Naive thymus-derived CD4-positive, alpha-beta T cell (primary cell): ENCODE measurements at regions of chr22 and their contacts with region 1.

Region 1: GRCh38 chr22:17171313-17172171 is 12.5 kb upstream of the HDHD5 start:
- DNase-seq: peak; percentile 54 to 89 (median 64)
- ATAC-seq: peak; percentile 96
- H3K4me3 ChIP-seq: peak overlapping the region; percentile 71
- H3K4me3 Mint-ChIP-seq: peak overlapping the region; percentile 82 to 91 (median 86)
- H3K27ac ChIP-seq: peak overlapping the region; percentile 66
- H3K27ac Mint-ChIP-seq: peak overlapping the region; percentile 24 to 88 (median 71)
- H3K4me1 ChIP-seq: peaks cover 0 to 4% of the 10 kb centered on the region in 2 donors
- H3K4me1 Mint-ChIP-seq: peaks cover 3 to 9% (median 5%) of the 10 kb centered on the region in 7 donors
- H3K27me3 ChIP-seq: no peaks in the 10 kb centered on the region
- H3K27me3 Mint-ChIP-seq: peaks cover 0 to 11% (median 0%) of the 10 kb centered on the region in 5 donors

Region 2: GRCh38 chr22:16917144-16918003 is 254.2 kb before region 1 on chr22:
- CTCF ChIA-PET with region 1: no interaction called
- POLR2A ChIA-PET with region 1: no interaction called
- intact Hi-C with region 1: loop called in 1 of 2 experiments (anchors 1 kb)
- DNase-seq: peak; percentile 11 to 60 (median 28)
- ATAC-seq: no peak
- H3K4me3 ChIP-seq: no peak overlapping the region
- H3K4me3 Mint-ChIP-seq: no peak overlapping the region
- H3K27ac ChIP-seq: no peak overlapping the region
- H3K27ac Mint-ChIP-seq: no peak overlapping the region
- H3K4me1 ChIP-seq: no peaks in the 10 kb centered on the region
- H3K4me1 Mint-ChIP-seq: peaks cover 0 to 6% (median 3%) of the 10 kb centered on the region in 7 donors
- H3K27me3 ChIP-seq: no peaks in the 10 kb centered on the region
- H3K27me3 Mint-ChIP-seq: peaks cover 19 to 38% (median 29%) of the 10 kb centered on the region in 5 donors

Region 3: DNA sequence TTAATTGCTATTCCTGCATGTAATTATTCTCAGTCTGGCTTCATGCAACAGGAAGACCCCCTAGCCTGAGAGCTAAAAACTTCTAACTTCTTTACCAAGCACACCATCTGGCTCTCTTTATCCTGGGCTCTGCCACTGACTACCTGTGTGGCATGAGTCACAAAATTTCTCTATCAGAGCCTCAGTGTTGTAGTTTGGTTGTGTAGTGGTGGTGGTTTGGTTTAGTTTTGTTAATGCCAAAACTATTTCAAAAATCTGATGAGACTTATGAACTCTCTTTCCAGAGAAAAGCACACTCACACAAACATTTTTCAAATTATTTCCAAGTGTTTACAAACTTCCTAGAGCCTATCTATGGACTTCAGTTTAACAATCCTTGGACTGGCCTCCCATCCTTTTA is 94.3 kb before region 1 on chr22:
- CTCF ChIA-PET with region 1: interaction called, 78 read pairs
- POLR2A ChIA-PET with region 1: interaction called, 3 read pairs
- intact Hi-C with region 1: loop called (anchors 1 kb)
- DNase-seq: no peak
- ATAC-seq: no peak
- H3K4me3 ChIP-seq: no peak overlapping the region
- H3K4me3 Mint-ChIP-seq: no peak overlapping the region
- H3K27ac ChIP-seq: no peak overlapping the region
- H3K27ac Mint-ChIP-seq: no peak overlapping the region
- H3K4me1 ChIP-seq: peaks cover 0 to 10% of the 10 kb centered on the region in 2 donors
- H3K4me1 Mint-ChIP-seq: peaks cover 0 to 19% (median 12%) of the 10 kb centered on the region in 7 donors
- H3K27me3 ChIP-seq: no peaks in the 10 kb centered on the region
- H3K27me3 Mint-ChIP-seq: peaks cover 0 to 38% (median 0%) of the 10 kb centered on the region in 5 donors

Region 4: DNA sequence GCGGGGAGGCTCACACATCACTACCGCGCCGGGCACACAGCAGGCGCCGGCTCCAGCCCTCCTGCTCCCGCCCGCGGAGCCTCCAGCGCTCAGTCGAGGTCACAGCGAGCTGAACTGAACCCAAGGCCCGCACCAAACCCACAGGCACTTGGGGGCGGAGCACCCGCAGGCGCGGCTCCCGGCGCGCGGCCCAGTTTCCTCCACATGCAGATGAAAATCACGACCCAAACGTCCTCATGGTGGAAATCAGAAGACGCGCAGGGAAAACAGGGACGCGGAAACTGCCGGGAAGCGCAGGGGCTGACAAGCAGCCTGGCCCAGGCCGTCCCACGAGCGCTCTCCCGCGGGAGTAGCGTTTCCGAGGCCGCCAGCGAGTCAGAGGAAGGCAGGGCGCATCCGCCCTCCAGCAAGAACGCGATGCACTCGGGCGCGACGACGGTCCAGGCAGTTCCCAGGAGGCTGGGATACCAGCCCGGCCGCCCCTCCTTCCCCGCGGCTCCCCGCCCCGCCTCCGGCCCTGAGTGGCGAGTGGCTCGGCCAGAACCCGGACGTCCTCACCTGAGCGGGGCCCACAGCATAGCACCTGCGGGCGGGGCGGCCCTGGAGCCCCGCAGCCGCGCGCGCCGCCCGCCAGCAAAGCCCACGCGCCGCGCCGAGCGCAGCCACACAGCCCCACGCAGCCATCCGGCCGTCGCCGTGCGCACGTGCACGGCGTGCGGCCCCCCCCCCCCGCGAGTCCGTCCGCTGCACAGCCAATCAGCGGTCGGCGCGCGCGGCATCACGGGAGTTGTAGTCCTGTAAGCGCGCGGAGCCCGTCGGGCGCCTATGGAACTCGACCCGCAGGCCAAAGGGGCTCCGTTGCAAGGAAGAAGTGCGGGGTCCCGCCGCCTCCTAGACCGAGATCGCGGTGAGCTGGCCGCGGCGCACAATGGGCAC is 12.7 kb before region 1 on chr22 and contains the start of gene HDHD5:
- CTCF ChIA-PET with region 1: interaction called, 9 read pairs
- POLR2A ChIA-PET with region 1: interaction called, 7 read pairs
- intact Hi-C with region 1: loop called in 1 of 2 experiments (anchors 1 kb)
- DNase-seq: peak; percentile 71 to 87 (median 84)
- ATAC-seq: peak; percentile 96
- H3K4me3 ChIP-seq: peak within 1 kb of the TSS; percentile 79
- H3K4me3 Mint-ChIP-seq: peak within 1 kb of the TSS; percentile 80 to 91 (median 88)
- H3K27ac ChIP-seq: peak within 1 kb of the TSS; percentile 79
- H3K27ac Mint-ChIP-seq: peak within 1 kb of the TSS in 8 of 9 donors; percentile 36 to 88 (median 76)
- H3K4me1 ChIP-seq: peaks cover 18 to 26% of the 10 kb centered on the region in 2 donors
- H3K4me1 Mint-ChIP-seq: peaks cover 18 to 48% (median 36%) of the 10 kb centered on the region in 7 donors
- H3K27me3 ChIP-seq: no peaks in the 10 kb centered on the region
- H3K27me3 Mint-ChIP-seq: no peaks in the 10 kb centered on the region
- total RNA-seq, gene HDHD5: 18.8 to 50.9 (median 26.2) TPM

Region 5: DNA sequence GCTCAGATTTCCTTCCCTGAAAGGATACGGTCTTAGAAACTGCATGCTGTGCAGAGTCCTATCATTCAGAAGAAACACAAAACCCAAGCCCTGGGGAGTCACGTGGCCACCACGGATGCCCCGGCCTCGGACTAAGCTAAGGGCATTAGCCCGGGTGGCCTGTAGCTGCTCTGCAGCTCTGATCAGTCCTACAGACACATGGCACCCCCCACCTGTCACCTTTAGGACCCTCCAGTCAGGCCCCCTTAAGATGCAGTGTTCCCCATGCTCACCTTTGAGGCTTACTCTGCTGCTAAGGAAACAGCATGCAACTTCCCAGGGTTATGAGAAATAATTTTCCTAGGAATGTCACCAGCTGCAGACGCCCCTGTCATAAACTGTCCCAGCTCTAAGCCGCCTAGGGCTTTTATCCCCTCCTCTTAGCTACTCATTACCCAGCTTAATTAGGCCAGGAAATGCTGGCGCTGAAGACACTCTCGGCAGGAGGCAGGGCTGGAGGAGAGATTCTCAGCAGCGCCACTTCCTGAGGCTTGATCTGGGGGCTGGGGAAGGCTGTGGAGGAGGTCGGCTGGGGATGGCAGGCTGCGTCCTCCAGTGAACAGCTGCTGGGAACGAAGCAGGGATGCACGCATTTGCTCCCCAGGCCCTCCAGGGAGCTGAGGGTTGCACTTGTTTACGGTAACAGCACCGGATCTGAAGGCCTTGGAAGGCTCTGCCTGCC is 94.9 kb after region 1 on chr22:
- CTCF ChIA-PET with region 1: no interaction called
- POLR2A ChIA-PET with region 1: no interaction called
- intact Hi-C with region 1: loop called in 1 of 2 experiments (anchors 5 kb)
- DNase-seq: peak in 5 of 9 donors; percentile 30 to 40 (median 33)
- ATAC-seq: peak; percentile 37
- H3K4me3 ChIP-seq: no peak overlapping the region
- H3K4me3 Mint-ChIP-seq: peak overlapping the region in 9 of 10 donors; percentile 5 to 75 (median 46)
- H3K27ac ChIP-seq: peak overlapping the region; percentile 39
- H3K27ac Mint-ChIP-seq: peak overlapping the region; percentile 71 to 91 (median 78)
- H3K4me1 ChIP-seq: peaks cover 0 to 11% of the 10 kb centered on the region in 2 donors
- H3K4me1 Mint-ChIP-seq: peaks cover 0 to 43% (median 29%) of the 10 kb centered on the region in 7 donors
- H3K27me3 ChIP-seq: no peaks in the 10 kb centered on the region
- H3K27me3 Mint-ChIP-seq: no peaks in the 10 kb centered on the region

Region 6: DNA sequence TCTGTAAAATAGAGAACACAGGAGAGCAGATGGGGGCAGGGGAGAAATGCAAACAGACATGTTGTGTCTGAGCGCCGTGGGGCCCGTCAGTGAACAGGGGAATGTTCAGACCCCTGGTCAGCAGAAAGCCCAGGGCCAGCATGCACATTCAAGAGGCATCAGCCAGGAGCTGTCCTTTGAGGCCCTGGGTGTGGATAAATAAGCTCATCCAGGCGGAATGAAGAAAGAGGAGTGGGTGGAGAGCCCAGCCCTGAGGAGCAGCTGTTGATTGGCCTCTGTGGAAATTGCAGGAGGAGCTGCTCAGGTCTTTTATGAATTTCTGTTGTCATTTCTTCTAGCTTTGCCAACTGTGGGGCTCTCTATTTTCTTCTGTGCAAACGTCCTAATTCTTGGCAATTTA is 148.0 kb after region 1 on chr22:
- CTCF ChIA-PET with region 1: no interaction called
- POLR2A ChIA-PET with region 1: no interaction called
- intact Hi-C with region 1: no loop called
- DNase-seq: no peak
- ATAC-seq: no peak
- H3K4me3 ChIP-seq: no peak overlapping the region
- H3K4me3 Mint-ChIP-seq: no peak overlapping the region
- H3K27ac ChIP-seq: no peak overlapping the region
- H3K27ac Mint-ChIP-seq: no peak overlapping the region
- H3K4me1 ChIP-seq: no peaks in the 10 kb centered on the region
- H3K4me1 Mint-ChIP-seq: peaks cover 0 to 3% (median 0%) of the 10 kb centered on the region in 7 donors
- H3K27me3 ChIP-seq: no peaks in the 10 kb centered on the region
- H3K27me3 Mint-ChIP-seq: peaks cover 0 to 12% (median 0%) of the 10 kb centered on the region in 5 donors

Region 7: GRCh38 chr22:17368554-17369438 is 197.3 kb after region 1 on chr22:
- CTCF ChIA-PET with region 1: no interaction called
- POLR2A ChIA-PET with region 1: no interaction called
- intact Hi-C with region 1: no loop called
- DNase-seq: peak in 3 of 9 donors; percentile 9 to 26 (median 16)
- ATAC-seq: peak; percentile 6
- H3K4me3 ChIP-seq: no peak overlapping the region
- H3K4me3 Mint-ChIP-seq: peak overlapping the region; percentile 75 to 86 (median 81)
- H3K27ac ChIP-seq: no peak overlapping the region
- H3K27ac Mint-ChIP-seq: peak overlapping the region in 2 of 9 donors; percentile 38 to 55
- H3K4me1 ChIP-seq: peaks cover 0 to 14% of the 10 kb centered on the region in 2 donors
- H3K4me1 Mint-ChIP-seq: peaks cover 13 to 35% (median 28%) of the 10 kb centered on the region in 7 donors
- H3K27me3 ChIP-seq: peaks cover 0 to 16% of the 10 kb centered on the region in 2 donors
- H3K27me3 Mint-ChIP-seq: peaks cover 53 to 68% (median 54%) of the 10 kb centered on the region in 5 donors